K562 (cell line): ENCODE measurements at regions of chr3 and their contacts with region 1.

Region 1: GRCh38 chr3:129278439-129278970 is at the start of gene HMCES:
- DNase-seq: peak; percentile 89 to 91 (median 90)
- ATAC-seq: peak; percentile 95
- H3K4me3 ChIP-seq: peak within 1 kb of the TSS; percentile 81
- H3K27ac ChIP-seq: peak within 1 kb of the TSS; percentile 87
- H3K4me1 ChIP-seq: peaks cover 10 to 12% of the 10 kb centered on the region in 2 experiments; a peak in 4 of 5 replicates
- H3K27me3 ChIP-seq: no peaks in the 10 kb centered on the region
- CTCF ChIP-seq: no peak
- EP300 ChIP-seq: no peak
- POLR2A ChIP-seq: peak; percentile 71
- RAD21 ChIP-seq: no peak
- polyA plus RNA-seq, gene HMCES: 23.0 to 25.2 TPM

Region 2: GRCh38 chr3:129289201-129289921 is 10.9 kb after region 1 on chr3:
- CTCF ChIA-PET with region 1: no interaction called
- POLR2A ChIA-PET with region 1: interaction called, 12 read pairs
- in situ Hi-C with region 1: no loop called
- intact Hi-C with region 1: no loop called
- DNase-seq: no peak
- ATAC-seq: no peak
- H3K4me3 ChIP-seq: no peak overlapping the region
- H3K27ac ChIP-seq: no peak overlapping the region
- H3K4me1 ChIP-seq: no peaks in the 10 kb centered on the region; a peak in 2 of 5 replicates
- H3K27me3 ChIP-seq: no peaks in the 10 kb centered on the region
- CTCF ChIP-seq: no peak
- EP300 ChIP-seq: no peak
- POLR2A ChIP-seq: no peak
- RAD21 ChIP-seq: no peak

Region 3: DNA sequence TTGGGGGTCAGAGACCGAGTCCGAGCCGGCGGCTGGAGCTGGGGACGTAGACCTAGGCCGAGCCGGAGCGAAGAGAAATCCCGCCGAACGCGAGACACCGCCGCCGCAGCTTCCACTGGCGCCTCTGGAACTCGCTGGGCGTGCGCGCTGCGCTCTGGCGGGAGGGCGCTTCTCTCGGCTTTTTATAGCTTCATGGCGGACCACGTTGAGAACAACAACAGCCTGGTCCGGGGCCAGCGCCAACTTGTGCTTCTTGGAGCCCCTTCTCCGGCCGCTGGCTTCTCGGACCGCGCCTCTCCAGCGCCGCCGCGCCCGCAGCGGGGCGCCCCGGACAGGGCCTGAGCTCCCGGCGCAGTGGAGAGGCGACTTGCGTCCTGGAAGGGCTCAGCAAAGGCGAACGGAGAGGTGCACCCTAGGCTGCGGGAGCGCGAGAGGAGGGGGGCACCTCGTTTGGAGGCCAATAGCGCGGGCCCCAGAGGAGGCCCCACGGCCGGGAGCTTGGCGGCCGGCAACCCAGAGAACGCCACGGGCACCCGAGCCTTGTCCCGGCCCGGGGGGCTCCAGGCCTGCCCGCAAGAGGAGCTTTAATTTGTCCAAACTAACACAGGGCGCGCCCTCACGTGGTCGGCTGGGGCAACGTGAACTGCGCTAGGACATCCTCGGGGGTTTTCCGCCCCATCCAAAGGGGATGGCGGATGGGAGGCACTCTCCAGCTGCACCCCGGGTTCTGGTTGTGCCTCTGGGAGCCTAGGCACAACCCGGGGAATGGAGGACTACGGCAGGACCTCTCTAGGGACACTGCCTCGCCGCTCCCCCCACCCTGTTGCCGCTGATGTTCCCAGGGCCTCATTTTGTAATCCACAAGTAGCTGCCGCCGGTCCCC is 37.9 kb after region 1 on chr3:
- CTCF ChIA-PET with region 1: no interaction called
- POLR2A ChIA-PET with region 1: interaction called, 8 read pairs
- in situ Hi-C with region 1: no loop called
- intact Hi-C with region 1: loop called (anchors 2 kb)
- DNase-seq: peak; percentile 73 to 87 (median 80)
- ATAC-seq: peak; percentile 62
- H3K4me3 ChIP-seq: peak overlapping the region; percentile 78
- H3K27ac ChIP-seq: peak overlapping the region; percentile 80; the same call in 2 of the 3 replicates
- H3K4me1 ChIP-seq: peaks cover 18 to 38% of the 10 kb centered on the region in 2 experiments; a peak in 4 of 5 replicates
- H3K27me3 ChIP-seq: no peaks in the 10 kb centered on the region
- CTCF ChIP-seq: peak; percentile 43 to 60 (median 58); a peak in 5 of 6 replicates
- EP300 ChIP-seq: no peak
- POLR2A ChIP-seq: peak; percentile 96
- RAD21 ChIP-seq: peak in 1 of 2 experiments; percentile 45; a peak in 2 of 4 replicates